ENCODE measurements at regions of chrX and their contacts with region 1.

Region 1: GRCh38 chrX:130902783-130903613 is at the start of gene ENOX2:
- DNase-seq: peak; percentile 94
- H3K4me3 ChIP-seq: peak within 1 kb of the TSS; percentile 69 to 78 (median 75)
- H3K27ac ChIP-seq: peak within 1 kb of the TSS; percentile 48
- H3K4me1 ChIP-seq: peaks cover 5% of the 10 kb centered on the region
- H3K27me3 ChIP-seq: no peaks in the 10 kb centered on the region
- CTCF ChIP-seq: no peak
- total RNA-seq, gene ENOX2: 9.3 to 20.2 TPM

Region 2: DNA sequence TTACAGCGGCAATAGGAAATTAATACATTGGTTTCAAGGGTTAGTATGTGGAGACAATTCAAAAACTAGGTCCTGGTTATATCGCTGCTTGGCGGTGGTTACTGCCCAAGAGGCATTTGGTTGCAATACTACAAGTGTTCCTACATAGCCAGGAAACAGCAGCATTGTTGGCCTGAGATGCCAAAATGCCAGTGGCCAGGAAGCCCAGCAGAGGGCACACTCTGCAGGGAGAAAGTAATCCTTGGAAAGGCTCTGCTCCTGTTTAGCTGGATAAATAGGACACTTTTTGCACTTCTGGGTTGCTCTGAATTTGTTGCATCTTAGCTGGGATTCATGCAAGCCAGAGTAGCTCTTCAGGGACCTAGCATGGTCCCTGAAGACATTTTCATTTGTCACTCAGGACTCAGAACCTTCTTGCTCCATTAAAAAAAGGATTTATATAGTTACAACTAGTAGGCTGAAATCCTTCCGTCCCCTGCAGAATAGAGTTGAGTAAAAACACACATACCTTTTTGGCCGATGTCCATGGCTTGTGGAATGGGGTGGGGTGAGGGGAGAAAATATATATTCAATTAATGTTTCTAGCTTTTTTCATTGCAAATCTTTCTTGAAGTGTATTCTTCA is 509.4 kb before region 1 on chrX:
- CTCF ChIA-PET with region 1: no interaction called
- dilution Hi-C with region 1: loop called (anchors 25 kb)
- in situ Hi-C with region 1: loop called in 1 of 2 experiments (anchors 25 kb)
- intact Hi-C with region 1: no loop called
- DNase-seq: peak; percentile 28
- H3K4me3 ChIP-seq: no peak overlapping the region
- H3K27ac ChIP-seq: no peak overlapping the region
- H3K4me1 ChIP-seq: no peaks in the 10 kb centered on the region
- H3K27me3 ChIP-seq: no peaks in the 10 kb centered on the region
- CTCF ChIP-seq: peak; percentile 78 to 86

Region 3: DNA sequence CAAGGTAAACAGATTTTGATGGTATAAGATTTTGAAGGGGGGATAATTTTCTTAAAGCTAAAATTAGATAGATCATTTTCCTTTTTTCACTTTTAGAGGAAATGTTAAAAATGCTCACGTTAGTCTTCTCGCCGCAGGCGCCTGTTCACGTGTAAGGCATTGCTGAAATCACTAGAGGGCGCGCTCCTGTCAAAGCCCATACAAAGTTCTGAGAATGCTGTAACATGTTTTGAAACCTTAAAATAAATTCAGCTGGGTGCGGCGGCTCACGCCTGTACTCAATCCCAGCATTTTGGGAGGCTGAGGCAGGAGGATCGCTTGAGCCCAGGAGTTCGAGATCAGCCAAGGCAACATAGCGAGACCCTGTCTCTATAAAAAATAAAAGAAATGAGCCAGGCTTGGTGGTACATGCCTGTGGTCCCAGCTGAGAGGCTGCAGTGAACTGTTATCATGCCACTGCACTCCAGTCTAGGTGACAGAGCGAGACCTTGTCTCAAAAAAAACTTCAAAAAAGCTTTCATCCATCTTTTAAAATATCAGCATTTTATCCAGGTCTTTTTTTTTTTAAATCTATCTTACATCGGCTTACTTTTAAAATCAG is 363.2 kb before region 1 on chrX:
- CTCF ChIA-PET with region 1: no interaction called
- dilution Hi-C with region 1: no loop called
- in situ Hi-C with region 1: loop called in 1 of 2 experiments (anchors 25 kb)
- intact Hi-C with region 1: no loop called
- DNase-seq: peak; percentile 23
- H3K4me3 ChIP-seq: no peak overlapping the region
- H3K27ac ChIP-seq: no peak overlapping the region
- H3K4me1 ChIP-seq: no peaks in the 10 kb centered on the region
- H3K27me3 ChIP-seq: peaks cover 3% of the 10 kb centered on the region
- CTCF ChIP-seq: peak; percentile 53 to 66

Region 4: DNA sequence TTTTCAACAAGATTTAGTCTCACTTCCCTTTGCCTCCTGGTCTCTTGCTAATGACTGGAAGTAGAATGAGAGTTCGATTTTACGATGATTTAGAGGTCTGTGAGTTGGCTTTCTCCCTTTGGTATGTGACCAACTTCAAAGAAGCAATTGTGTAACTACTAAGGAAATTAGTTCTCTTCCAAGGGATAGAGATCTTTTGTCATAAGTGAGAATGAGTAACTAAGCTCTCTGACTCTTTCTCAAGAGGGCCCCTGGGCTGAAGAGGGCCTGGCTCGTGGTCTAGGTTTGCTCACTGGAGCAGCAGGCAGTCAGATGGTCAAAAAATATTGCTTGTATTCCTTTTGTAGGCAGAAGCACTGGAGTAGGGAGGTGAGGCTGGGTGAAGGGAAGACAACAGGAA is 176.3 kb before region 1 on chrX:
- CTCF ChIA-PET with region 1: no interaction called
- dilution Hi-C with region 1: no loop called
- in situ Hi-C with region 1: no loop called
- intact Hi-C with region 1: loop called (anchors 5 kb)
- DNase-seq: peak; percentile 72
- H3K4me3 ChIP-seq: no peak overlapping the region
- H3K27ac ChIP-seq: peak overlapping the region; percentile 33
- H3K4me1 ChIP-seq: peaks cover 23% of the 10 kb centered on the region
- H3K27me3 ChIP-seq: no peaks in the 10 kb centered on the region
- CTCF ChIP-seq: no peak